ENCODE measurements at regions of chrX and their contacts with region 1.

Region 1: DNA sequence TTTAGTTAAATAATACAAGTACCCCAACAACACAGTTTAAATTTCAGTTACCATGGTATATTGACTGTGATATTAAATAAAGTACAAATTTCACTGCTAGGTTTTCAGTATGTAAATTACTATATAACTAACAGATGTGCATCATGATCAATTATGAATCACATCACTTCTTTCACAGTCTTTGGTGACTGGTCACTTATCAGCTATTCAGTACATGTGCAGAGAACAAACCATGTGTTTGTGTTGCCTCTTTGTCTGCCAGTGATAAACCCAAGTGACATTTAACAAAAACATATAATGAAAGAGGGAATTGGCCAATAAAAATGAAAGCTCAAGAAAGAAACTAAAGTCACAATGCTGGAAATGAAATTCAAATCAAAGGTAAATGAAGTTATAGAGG is 249.3 kb downstream of the CHIC1 start:
- DNase-seq: no peak

Region 2: DNA sequence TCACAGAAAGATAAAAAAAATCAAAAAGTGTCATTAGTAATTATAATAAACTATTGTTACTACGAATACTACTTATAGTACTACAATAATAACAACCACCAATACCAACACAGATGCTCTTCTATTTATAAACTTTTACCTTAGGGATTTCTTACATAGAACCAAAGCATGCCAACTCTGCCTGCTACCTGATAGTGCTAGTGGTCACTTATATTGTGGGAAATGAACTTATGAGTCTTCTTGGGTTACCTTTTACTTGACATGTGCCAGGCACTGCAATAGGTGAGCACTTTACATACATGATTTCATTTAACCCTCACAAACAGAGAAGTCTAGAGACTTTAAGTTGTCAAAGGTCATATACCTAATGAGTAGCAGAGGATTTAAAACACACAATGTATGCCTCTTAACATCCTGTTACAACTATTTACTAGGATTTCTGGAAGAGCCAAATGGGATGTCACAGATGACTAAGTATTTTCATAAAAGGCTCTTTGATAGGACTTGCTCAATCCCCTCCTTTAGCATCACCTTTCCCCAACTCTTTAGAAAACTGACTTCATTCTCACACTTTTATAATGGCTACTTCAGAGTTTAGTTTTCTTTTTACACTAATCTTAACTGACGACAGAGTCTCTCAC is 15.9 kb after region 1 on chrX:
- intact Hi-C with region 1: loop called in 1 of 2 experiments (anchors 1 kb)
- DNase-seq: no peak

Measured in posterior vena cava (tissue), 2 donors.